ENCODE measurements at regions of chr2 and their contacts with region 1.

Region 1: DNA sequence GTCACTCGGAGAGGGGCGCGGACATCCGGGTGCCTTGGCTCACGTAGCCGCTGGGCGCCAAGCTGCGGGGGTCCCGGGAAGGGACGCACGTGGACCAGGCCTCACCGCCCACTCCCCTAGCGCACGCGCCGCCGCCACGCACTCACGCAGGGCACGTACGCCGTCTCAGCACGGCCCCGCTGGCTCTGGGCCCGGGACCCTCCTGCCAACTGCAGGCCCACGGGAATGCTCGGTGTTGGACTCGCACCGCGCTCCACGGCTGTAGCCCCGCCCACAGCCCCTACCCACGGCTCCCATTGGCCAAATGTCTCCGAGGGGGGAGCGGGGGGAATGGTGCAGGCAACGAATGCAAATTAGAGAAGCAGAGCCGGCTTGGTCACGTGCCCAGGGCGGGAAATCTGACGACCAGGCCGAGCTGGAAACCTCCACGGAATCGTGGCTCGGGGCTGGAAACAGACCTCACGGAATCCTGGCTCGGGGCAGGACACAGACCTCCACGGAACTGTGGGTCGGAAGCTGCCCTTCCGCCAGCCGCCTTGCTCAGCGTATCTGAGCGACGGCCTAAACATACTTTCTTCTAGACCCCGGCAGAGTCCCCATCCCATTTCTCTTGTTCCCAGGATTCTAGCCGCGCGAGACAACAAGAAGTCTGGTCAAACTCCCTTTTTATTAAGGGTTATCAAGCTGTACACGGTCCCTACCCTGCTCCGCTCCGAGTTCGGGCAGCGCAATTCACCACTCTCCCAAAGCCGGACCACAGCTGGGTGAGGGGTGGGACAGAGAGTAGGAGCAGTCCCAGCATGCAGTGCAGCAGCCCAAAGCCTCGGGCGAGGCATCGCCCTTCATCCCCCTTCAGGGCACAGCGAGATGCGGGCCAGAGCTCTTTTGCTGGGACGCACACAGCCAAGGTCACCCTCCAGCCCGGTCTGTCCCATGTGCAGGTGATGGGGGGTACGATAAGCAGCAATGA is at the start of gene ABCB6:
- DNase-seq: peak; percentile 59 to 92 (median 87)
- ATAC-seq: peak; percentile 91
- H3K4me3 ChIP-seq: peak within 1 kb of the TSS; percentile 50 to 87
- H3K4me3 Mint-ChIP-seq: peak within 1 kb of the TSS; percentile 82
- H3K27ac ChIP-seq: peak within 1 kb of the TSS; percentile 43 to 47
- H3K27ac Mint-ChIP-seq: peak within 1 kb of the TSS; percentile 72
- H3K4me1 ChIP-seq: peaks cover 23% of the 10 kb centered on the region
- H3K4me1 Mint-ChIP-seq: peaks cover 19% of the 10 kb centered on the region
- H3K27me3 ChIP-seq: no peaks in the 10 kb centered on the region
- H3K27me3 Mint-ChIP-seq: no peaks in the 10 kb centered on the region
- CTCF ChIP-seq: no peak
- total RNA-seq, gene ABCB6: 3.4 to 3.5 TPM

Region 2: DNA sequence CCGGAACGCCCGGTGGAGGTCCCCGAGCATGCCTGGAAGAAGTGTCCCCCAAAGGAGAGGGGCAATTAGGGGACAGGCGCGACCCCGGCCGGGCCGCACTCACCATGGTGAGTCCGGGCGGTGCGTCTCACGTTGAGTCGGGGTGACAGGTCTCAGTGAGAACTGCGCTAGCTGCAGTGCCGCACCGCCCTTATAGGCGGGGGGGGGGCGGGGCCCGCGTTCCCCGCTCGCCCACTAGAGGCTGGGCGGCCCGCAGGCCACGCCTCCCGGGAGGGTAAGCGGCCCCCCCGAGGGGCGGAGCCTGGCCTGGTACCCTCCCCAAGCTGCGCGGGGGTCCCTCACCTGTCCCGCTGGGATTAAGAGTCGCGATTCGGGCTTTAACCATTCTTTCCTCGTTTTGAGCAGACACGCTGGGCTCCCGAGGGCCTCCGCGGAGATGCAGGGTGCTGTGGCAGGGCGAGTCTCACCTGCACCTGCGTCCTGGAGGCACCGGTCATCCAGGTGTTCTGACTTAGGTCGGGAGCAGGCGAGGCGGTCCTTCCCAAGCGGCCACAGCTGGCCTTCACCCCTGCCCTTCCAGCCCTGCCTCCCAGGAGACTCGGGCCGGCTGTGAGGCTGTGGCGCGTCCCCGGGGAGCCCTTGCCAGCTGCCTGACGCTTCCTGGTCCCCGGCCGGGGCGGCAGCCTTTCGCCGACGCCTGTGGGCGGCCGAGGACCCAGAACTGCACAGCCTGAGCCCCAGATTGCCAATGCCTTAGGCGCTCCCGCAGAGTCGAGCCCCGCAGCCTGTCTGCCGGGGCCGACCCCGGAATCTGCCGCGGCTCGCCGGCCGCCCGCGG is 35.0 kb after region 1 on chr2 and contains the start of gene TUBA4A:
- CTCF ChIA-PET with region 1: interaction called, 4 read pairs
- POLR2A ChIA-PET with region 1: interaction called, 9 read pairs
- intact Hi-C with region 1: loop called in 1 of 2 experiments (anchors 1 kb)
- DNase-seq: peak; percentile 82 to 95 (median 91)
- ATAC-seq: peak; percentile 74
- H3K4me3 ChIP-seq: peak within 1 kb of the TSS; percentile 98 to 100
- H3K4me3 Mint-ChIP-seq: peak within 1 kb of the TSS; percentile 87
- H3K27ac ChIP-seq: peak within 1 kb of the TSS; percentile 81 to 93
- H3K27ac Mint-ChIP-seq: peak within 1 kb of the TSS; percentile 96
- H3K4me1 ChIP-seq: peaks cover 37% of the 10 kb centered on the region
- H3K4me1 Mint-ChIP-seq: peaks cover 46% of the 10 kb centered on the region
- H3K27me3 ChIP-seq: no peaks in the 10 kb centered on the region
- H3K27me3 Mint-ChIP-seq: no peaks in the 10 kb centered on the region
- CTCF ChIP-seq: no peak
- total RNA-seq, gene TUBA4A: 322 TPM

Measured in CD8-positive, alpha-beta T cell (primary cell).